Activated CD4-positive, alpha-beta memory T cell treated with anti-CD3 and anti-CD28 coated beads for 36 hours (primary cell): ENCODE measurements at regions of chr7 and their contacts with region 1.

Region 1: GRCh38 chr7:156640257-156640948 is at the start of gene RNF32:
- DNase-seq: peak; percentile 99
- H3K4me3 Mint-ChIP-seq: peak within 1 kb of the TSS; percentile 88
- H3K27ac Mint-ChIP-seq: peak within 1 kb of the TSS; percentile 84
- H3K4me1 Mint-ChIP-seq: peaks cover 8% of the 10 kb centered on the region
- H3K27me3 Mint-ChIP-seq: peaks cover 10% of the 10 kb centered on the region
- total RNA-seq, gene RNF32: 1.4 to 2.6 TPM

Region 2: DNA sequence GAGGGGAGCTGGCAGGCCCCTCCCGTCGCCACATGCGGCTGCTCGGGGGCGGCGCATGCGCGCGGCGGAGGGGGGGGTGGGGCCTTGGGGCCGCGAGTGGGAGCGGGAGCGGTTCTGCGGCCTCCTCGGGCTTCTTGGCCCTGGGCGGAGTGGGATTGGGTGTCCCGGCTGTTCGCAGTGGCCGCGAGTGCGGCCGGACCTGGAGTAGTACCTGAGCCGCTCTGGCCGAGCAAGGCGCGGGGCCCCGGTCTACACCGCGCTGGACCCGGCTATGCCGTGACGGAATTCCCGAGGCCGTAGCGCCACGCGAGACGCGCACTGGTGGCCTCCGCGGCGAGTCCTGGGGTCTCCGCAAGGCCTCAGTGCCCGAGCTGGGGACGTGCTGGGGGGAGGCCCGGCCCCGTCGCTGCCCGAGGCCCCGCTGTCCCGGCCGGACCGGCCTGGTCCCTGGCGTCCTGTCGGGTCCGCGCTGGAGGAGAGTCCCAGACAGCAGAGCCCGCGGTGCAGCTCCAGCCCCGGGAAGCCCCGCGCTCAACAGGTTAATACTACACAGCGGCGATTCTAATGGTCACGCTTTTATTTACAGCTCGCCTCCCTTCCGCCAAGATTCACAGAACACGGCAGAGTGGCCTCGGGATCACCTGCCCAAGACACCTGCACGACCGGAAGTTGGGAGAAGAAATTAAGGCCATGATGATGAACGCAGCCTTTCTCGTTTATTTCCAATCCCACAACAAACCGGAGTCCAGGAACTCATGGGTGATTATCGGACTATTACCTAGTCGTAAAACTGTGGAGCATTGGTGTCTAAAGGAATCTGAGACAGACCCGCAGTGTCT is 1636.8 kb before region 1 on chr7:
- CTCF ChIA-PET with region 1: no interaction called
- POLR2A ChIA-PET with region 1: no interaction called
- intact Hi-C with region 1: loop called (anchors 10 kb)
- DNase-seq: peak; percentile 89
- H3K4me3 Mint-ChIP-seq: peak overlapping the region; percentile 89
- H3K27ac Mint-ChIP-seq: peak overlapping the region; percentile 91
- H3K4me1 Mint-ChIP-seq: peaks cover 12% of the 10 kb centered on the region
- H3K27me3 Mint-ChIP-seq: no peaks in the 10 kb centered on the region

Region 3: GRCh38 chr7:156612930-156613329 is 27.5 kb before region 1 on chr7:
- CTCF ChIA-PET with region 1: no interaction called
- POLR2A ChIA-PET with region 1: interaction called, 8 read pairs
- intact Hi-C with region 1: loop called (anchors 1 kb)
- DNase-seq: peak; percentile 89
- H3K4me3 Mint-ChIP-seq: no peak overlapping the region
- H3K27ac Mint-ChIP-seq: peak overlapping the region; percentile 10
- H3K4me1 Mint-ChIP-seq: peaks cover 26% of the 10 kb centered on the region
- H3K27me3 Mint-ChIP-seq: peaks cover 32% of the 10 kb centered on the region

Region 4: DNA sequence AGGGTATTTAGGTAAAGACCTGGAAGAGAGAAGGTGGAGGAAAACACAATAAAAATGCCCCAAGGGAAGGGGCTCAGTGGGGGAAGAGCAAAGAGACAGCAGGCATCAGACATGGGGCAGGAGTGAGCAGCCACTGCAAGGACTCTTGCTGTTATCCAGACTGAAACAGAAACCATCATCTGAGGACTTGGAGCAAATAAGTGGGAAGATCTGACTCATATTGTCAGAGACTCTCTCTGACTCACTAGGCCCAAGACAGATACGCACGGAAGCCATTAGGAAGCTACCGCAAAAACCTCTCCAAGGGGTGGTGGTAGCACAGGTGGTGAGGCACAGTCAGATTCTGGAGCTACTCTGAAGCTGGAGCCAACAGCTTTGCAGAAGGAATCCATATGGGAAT is 110.9 kb after region 1 on chr7:
- CTCF ChIA-PET with region 1: no interaction called
- POLR2A ChIA-PET with region 1: no interaction called
- intact Hi-C with region 1: loop called (anchors 1 kb)
- DNase-seq: peak; percentile 79
- H3K4me3 Mint-ChIP-seq: no peak overlapping the region
- H3K27ac Mint-ChIP-seq: peak overlapping the region; percentile 11
- H3K4me1 Mint-ChIP-seq: peaks cover 14% of the 10 kb centered on the region
- H3K27me3 Mint-ChIP-seq: no peaks in the 10 kb centered on the region

Region 5: GRCh38 chr7:156773966-156774365 is 133.6 kb after region 1 on chr7:
- CTCF ChIA-PET with region 1: no interaction called
- POLR2A ChIA-PET with region 1: no interaction called
- intact Hi-C with region 1: loop called (anchors 1 kb)
- DNase-seq: no peak
- H3K4me3 Mint-ChIP-seq: no peak overlapping the region
- H3K27ac Mint-ChIP-seq: peak overlapping the region; percentile 9
- H3K4me1 Mint-ChIP-seq: peaks cover 58% of the 10 kb centered on the region
- H3K27me3 Mint-ChIP-seq: no peaks in the 10 kb centered on the region

Region 6: GRCh38 chr7:156816943-156817572 is 176.7 kb after region 1 on chr7:
- CTCF ChIA-PET with region 1: no interaction called
- POLR2A ChIA-PET with region 1: no interaction called
- intact Hi-C with region 1: loop called (anchors 2 kb)
- DNase-seq: no peak
- H3K4me3 Mint-ChIP-seq: no peak overlapping the region
- H3K27ac Mint-ChIP-seq: no peak overlapping the region
- H3K4me1 Mint-ChIP-seq: peaks cover 2% of the 10 kb centered on the region
- H3K27me3 Mint-ChIP-seq: no peaks in the 10 kb centered on the region

Region 7: GRCh38 chr7:157138424-157139110 is 498.2 kb after region 1 on chr7 and contains the start of gene UBE3C:
- CTCF ChIA-PET with region 1: no interaction called
- POLR2A ChIA-PET with region 1: no interaction called
- intact Hi-C with region 1: loop called (anchors 2 kb)
- DNase-seq: peak; percentile 91
- H3K4me3 Mint-ChIP-seq: peak within 1 kb of the TSS; percentile 79
- H3K27ac Mint-ChIP-seq: peak within 1 kb of the TSS; percentile 91
- H3K4me1 Mint-ChIP-seq: peaks cover 37% of the 10 kb centered on the region
- H3K27me3 Mint-ChIP-seq: no peaks in the 10 kb centered on the region
- total RNA-seq, gene UBE3C: 59.8 to 59.9 TPM